B cell (primary cell): ENCODE measurements at regions of chr19 and their contacts with region 1.

Region 1: DNA sequence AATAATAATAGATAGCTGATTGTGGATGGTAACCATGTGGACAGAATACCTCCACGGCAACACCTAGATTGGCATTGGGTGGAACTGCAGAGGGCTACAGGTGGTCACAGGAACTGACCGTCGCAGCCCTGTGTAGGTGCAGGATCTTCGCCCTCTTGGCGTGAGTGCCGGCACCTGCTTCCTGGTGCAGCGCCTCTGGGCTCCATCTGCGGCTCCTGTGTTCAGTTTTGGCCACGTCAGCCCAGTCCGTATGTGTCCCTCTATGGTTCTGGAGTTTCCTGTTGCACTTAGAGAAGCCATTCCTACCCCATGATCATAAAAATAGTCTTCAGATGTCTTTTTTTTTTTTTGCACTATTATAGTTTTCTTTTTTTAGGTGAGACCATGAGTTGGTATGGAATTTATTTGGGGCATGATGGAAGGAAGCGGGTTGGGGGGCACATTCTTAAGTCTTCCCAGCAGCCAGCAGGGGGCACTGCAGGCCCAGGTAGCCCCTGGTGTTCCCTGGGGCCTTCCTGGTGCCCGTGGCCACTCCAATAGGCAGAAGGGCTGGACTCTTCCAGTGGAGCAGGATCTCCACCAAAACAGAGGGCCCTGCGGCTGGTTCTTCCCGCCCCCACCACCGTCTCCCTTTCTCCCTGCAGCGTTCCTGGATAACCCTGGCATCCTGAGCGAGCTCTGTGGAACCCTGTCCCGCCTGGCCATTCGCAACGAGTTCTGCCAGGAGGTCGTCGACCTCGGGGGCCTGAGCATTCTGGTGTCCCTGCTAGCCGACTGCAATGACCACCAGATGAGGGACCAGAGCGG is 10.1 kb upstream of the SLC25A42 start:
- DNase-seq: peak; percentile 75
- ATAC-seq: peak; percentile 66
- H3K4me3 ChIP-seq: no peak overlapping the region
- H3K4me3 Mint-ChIP-seq: no peak overlapping the region
- H3K27ac ChIP-seq: no peak overlapping the region
- H3K27ac Mint-ChIP-seq: no peak overlapping the region
- H3K4me1 ChIP-seq: no peaks in the 10 kb centered on the region
- H3K4me1 Mint-ChIP-seq: no peaks in the 10 kb centered on the region
- H3K27me3 ChIP-seq: no peaks in the 10 kb centered on the region
- H3K27me3 Mint-ChIP-seq: no peaks in the 10 kb centered on the region
- CTCF ChIP-seq: peak; percentile 82

Region 2: GRCh38 chr19:18856385-18857126 is 197.2 kb before region 1 on chr19:
- CTCF ChIA-PET with region 1: no interaction called
- POLR2A ChIA-PET with region 1: no interaction called
- intact Hi-C with region 1: no loop called
- DNase-seq: no peak
- ATAC-seq: no peak
- H3K4me3 ChIP-seq: no peak overlapping the region
- H3K4me3 Mint-ChIP-seq: no peak overlapping the region
- H3K27ac ChIP-seq: no peak overlapping the region
- H3K27ac Mint-ChIP-seq: no peak overlapping the region
- H3K4me1 ChIP-seq: peaks cover 2 to 15% of the 10 kb centered on the region in 2 donors
- H3K4me1 Mint-ChIP-seq: peaks cover 7% of the 10 kb centered on the region
- H3K27me3 ChIP-seq: no peaks in the 10 kb centered on the region
- H3K27me3 Mint-ChIP-seq: no peaks in the 10 kb centered on the region
- CTCF ChIP-seq: no peak

Region 3: GRCh38 chr19:18940769-18941407 is 112.8 kb before region 1 on chr19 and contains the start of gene HOMER3:
- CTCF ChIA-PET with region 1: no interaction called
- POLR2A ChIA-PET with region 1: no interaction called
- intact Hi-C with region 1: no loop called
- DNase-seq: peak; percentile 82
- ATAC-seq: peak; percentile 89
- H3K4me3 ChIP-seq: peak within 1 kb of the TSS; percentile 15 to 67 (median 49)
- H3K4me3 Mint-ChIP-seq: peak within 1 kb of the TSS; percentile 81
- H3K27ac ChIP-seq: no peak within 1 kb of the TSS
- H3K27ac Mint-ChIP-seq: no peak within 1 kb of the TSS
- H3K4me1 ChIP-seq: peaks cover 16 to 20% of the 10 kb centered on the region in 2 donors
- H3K4me1 Mint-ChIP-seq: peaks cover 20% of the 10 kb centered on the region
- H3K27me3 ChIP-seq: peaks cover 0 to 26% (median 6%) of the 10 kb centered on the region in 4 experiments
- H3K27me3 Mint-ChIP-seq: peaks cover 28% of the 10 kb centered on the region
- CTCF ChIP-seq: no peak
- total RNA-seq, gene HOMER3: 4.7 and 5.9 TPM in 2 replicates

Region 4: DNA sequence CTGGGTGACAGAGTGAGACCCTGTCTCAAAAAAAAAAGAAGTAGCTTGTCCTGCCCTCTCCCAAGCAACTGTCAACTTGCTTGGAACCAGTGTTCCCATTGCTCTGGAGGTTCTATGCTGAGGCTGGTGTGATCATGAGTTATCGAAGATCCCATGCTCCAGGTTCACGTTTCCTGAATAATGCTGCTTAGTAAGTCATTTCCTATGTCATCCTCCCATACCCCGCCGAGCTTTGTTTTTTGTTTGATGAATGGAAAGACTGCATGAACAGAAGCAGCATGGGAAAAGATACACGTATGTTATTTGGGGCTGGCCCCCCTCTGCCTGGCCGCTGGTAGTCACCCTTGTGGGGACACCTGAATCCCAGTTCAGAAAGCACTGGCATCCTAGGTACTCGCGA is 21.4 kb after region 1 on chr19:
- CTCF ChIA-PET with region 1: no interaction called
- POLR2A ChIA-PET with region 1: no interaction called
- intact Hi-C with region 1: no loop called
- DNase-seq: no peak
- ATAC-seq: no peak
- H3K4me3 ChIP-seq: no peak overlapping the region
- H3K4me3 Mint-ChIP-seq: no peak overlapping the region
- H3K27ac ChIP-seq: no peak overlapping the region
- H3K27ac Mint-ChIP-seq: peak overlapping the region; percentile 22
- H3K4me1 ChIP-seq: peaks cover 6 to 33% of the 10 kb centered on the region in 2 donors
- H3K4me1 Mint-ChIP-seq: peaks cover 61% of the 10 kb centered on the region
- H3K27me3 ChIP-seq: no peaks in the 10 kb centered on the region
- H3K27me3 Mint-ChIP-seq: no peaks in the 10 kb centered on the region
- CTCF ChIP-seq: no peak

Region 5: GRCh38 chr19:19110410-19111135 is 56.9 kb after region 1 on chr19:
- CTCF ChIA-PET with region 1: interaction called, 27 read pairs
- POLR2A ChIA-PET with region 1: interaction called, 7 read pairs
- intact Hi-C with region 1: loop called (anchors 1 kb)
- DNase-seq: peak; percentile 53
- ATAC-seq: peak; percentile 52
- H3K4me3 ChIP-seq: no peak overlapping the region
- H3K4me3 Mint-ChIP-seq: peak overlapping the region; percentile 34
- H3K27ac ChIP-seq: no peak overlapping the region
- H3K27ac Mint-ChIP-seq: no peak overlapping the region
- H3K4me1 ChIP-seq: peaks cover 0 to 15% of the 10 kb centered on the region in 2 donors
- H3K4me1 Mint-ChIP-seq: peaks cover 24% of the 10 kb centered on the region
- H3K27me3 ChIP-seq: no peaks in the 10 kb centered on the region
- H3K27me3 Mint-ChIP-seq: no peaks in the 10 kb centered on the region
- CTCF ChIP-seq: peak; percentile 47

Region 6: DNA sequence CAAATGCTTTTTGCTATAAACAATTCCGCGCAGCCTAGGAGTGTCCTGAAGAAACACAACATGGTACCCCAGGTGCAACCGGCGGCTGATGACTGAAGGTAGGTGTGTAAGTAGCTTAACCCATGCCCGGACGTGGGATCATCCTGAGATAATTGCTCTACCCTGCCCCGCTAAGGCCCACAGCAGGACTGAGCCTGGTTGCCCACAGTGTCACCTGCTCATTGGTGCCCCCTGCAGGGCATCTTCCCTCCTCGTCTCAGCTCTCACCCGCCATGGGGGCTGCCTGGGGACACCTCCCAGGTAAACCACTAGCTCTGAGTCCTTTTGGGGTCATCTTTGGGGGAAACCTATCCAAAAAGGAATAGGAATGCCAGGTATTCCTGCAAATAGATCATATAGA is 62.2 kb after region 1 on chr19:
- CTCF ChIA-PET with region 1: interaction called, 27 read pairs
- POLR2A ChIA-PET with region 1: no interaction called
- intact Hi-C with region 1: loop called (anchors 1 kb)
- DNase-seq: peak; percentile 55
- ATAC-seq: peak; percentile 45
- H3K4me3 ChIP-seq: no peak overlapping the region
- H3K4me3 Mint-ChIP-seq: no peak overlapping the region
- H3K27ac ChIP-seq: no peak overlapping the region
- H3K27ac Mint-ChIP-seq: no peak overlapping the region
- H3K4me1 ChIP-seq: peaks cover 0 to 7% of the 10 kb centered on the region in 2 donors
- H3K4me1 Mint-ChIP-seq: peaks cover 12% of the 10 kb centered on the region
- H3K27me3 ChIP-seq: no peaks in the 10 kb centered on the region
- H3K27me3 Mint-ChIP-seq: no peaks in the 10 kb centered on the region
- CTCF ChIP-seq: peak; percentile 53

Region 7: GRCh38 chr19:19138169-19138981 is 84.7 kb after region 1 on chr19 and contains the start of gene TMEM161A:
- CTCF ChIA-PET with region 1: interaction called, 82 read pairs
- POLR2A ChIA-PET with region 1: no interaction called
- intact Hi-C with region 1: loop called (anchors 1 kb)
- DNase-seq: peak; percentile 96
- ATAC-seq: peak; percentile 100
- H3K4me3 ChIP-seq: peak within 1 kb of the TSS; percentile 78 to 90 (median 86)
- H3K4me3 Mint-ChIP-seq: peak within 1 kb of the TSS; percentile 97
- H3K27ac ChIP-seq: peak within 1 kb of the TSS; percentile 29 to 70
- H3K27ac Mint-ChIP-seq: peak within 1 kb of the TSS; percentile 93
- H3K4me1 ChIP-seq: peaks cover 15 to 26% of the 10 kb centered on the region in 2 donors
- H3K4me1 Mint-ChIP-seq: peaks cover 41% of the 10 kb centered on the region
- H3K27me3 ChIP-seq: no peaks in the 10 kb centered on the region
- H3K27me3 Mint-ChIP-seq: no peaks in the 10 kb centered on the region
- CTCF ChIP-seq: no peak
- total RNA-seq, gene TMEM161A: 23.2 and 23.6 TPM in 2 replicates

Region 8: DNA sequence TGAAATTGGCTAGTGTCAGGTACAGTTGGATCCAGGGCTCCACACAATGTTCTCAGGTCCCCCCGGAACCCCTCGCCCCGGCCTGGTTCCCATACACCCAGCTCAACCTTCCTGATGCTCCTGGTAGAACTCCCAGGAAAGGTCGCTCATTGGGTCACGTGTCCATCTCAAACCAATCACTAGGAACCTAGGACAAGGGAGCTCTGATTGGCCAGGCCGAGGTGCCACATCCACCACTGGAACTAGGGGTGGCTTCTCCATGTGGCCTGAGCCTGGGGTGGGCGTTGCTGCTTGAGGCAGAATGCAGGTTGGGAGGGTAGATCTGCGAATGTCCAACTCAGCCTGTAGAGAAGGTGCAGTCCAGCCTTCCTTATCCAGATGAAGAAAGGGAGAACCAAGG is 123.2 kb after region 1 on chr19:
- CTCF ChIA-PET with region 1: interaction called, 31 read pairs
- POLR2A ChIA-PET with region 1: no interaction called
- intact Hi-C with region 1: loop called (anchors 2 kb)
- DNase-seq: no peak
- ATAC-seq: no peak
- H3K4me3 ChIP-seq: no peak overlapping the region
- H3K4me3 Mint-ChIP-seq: no peak overlapping the region
- H3K27ac ChIP-seq: no peak overlapping the region
- H3K27ac Mint-ChIP-seq: no peak overlapping the region
- H3K4me1 ChIP-seq: peaks cover 0 to 4% of the 10 kb centered on the region in 2 donors
- H3K4me1 Mint-ChIP-seq: peaks cover 5% of the 10 kb centered on the region
- H3K27me3 ChIP-seq: no peaks in the 10 kb centered on the region
- H3K27me3 Mint-ChIP-seq: no peaks in the 10 kb centered on the region
- CTCF ChIP-seq: no peak